ENCODE measurements at regions of chrX and their contacts with region 1.

Region 1: DNA sequence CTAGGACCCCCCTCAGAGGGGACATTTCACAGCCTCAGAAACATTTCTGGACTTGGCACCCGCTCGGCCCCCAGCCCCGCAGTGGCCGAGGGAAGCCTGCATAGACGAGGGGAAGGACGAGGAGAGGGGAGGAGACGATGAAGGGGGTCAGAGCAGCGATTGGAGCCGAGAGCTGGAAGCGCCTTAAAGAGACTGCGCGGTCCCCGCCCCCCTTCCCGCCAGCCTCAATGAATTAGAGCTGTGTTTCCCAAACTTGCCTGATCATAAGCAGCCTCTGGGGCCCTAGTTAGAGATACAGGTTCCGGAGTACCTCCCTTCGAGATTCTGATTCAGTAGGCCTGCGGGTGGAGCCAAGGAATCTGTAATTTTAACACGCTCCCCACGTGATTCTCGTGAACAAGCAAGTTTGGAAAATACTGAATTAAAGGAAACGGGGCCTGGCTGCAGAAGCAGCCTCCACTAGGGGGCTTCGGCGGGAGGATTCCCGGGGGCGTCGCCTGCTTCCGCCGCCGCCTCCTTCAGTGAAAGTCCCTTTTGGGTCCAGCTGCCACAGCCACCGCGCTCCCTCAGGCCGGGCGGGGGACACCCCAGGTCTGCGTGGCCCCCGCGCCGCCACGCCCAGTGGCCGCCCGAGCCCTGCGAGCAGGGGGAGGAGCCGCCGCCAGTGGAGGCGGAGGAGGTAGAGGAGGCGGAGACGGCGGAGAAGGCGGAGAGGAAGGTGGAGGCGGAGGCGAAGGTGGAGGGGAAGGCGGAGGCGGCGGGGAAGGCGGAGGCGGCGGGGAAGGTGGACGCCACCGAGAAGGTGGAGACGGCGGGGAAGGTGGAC is at the start of gene USP27X:
- DNase-seq: peak; percentile 75
- H3K4me3 Mint-ChIP-seq: peak within 1 kb of the TSS; percentile 80
- H3K27ac Mint-ChIP-seq: peak within 1 kb of the TSS; percentile 71
- H3K4me1 Mint-ChIP-seq: peaks cover 17% of the 10 kb centered on the region
- H3K27me3 Mint-ChIP-seq: peaks cover 1% of the 10 kb centered on the region
- total RNA-seq, gene USP27X: 1.2 and 1.9 TPM in 2 replicates

Region 2: GRCh38 chrX:49291615-49292337 is 587.3 kb before region 1 on chrX:
- intact Hi-C with region 1: loop called (anchors 5 kb)
- DNase-seq: peak; percentile 37
- H3K4me3 Mint-ChIP-seq: no peak overlapping the region
- H3K27ac Mint-ChIP-seq: no peak overlapping the region
- H3K4me1 Mint-ChIP-seq: peaks cover 16% of the 10 kb centered on the region
- H3K27me3 Mint-ChIP-seq: peaks cover 10% of the 10 kb centered on the region

Region 3: GRCh38 chrX:49761481-49761880 is 117.6 kb before region 1 on chrX:
- intact Hi-C with region 1: loop called (anchors 2 kb)
- DNase-seq: no peak
- H3K4me3 Mint-ChIP-seq: no peak overlapping the region
- H3K27ac Mint-ChIP-seq: no peak overlapping the region
- H3K4me1 Mint-ChIP-seq: no peaks in the 10 kb centered on the region
- H3K27me3 Mint-ChIP-seq: peaks cover 5% of the 10 kb centered on the region

Region 4: GRCh38 chrX:49773993-49774392 is 105.1 kb before region 1 on chrX:
- intact Hi-C with region 1: no loop called
- DNase-seq: no peak
- H3K4me3 Mint-ChIP-seq: no peak overlapping the region
- H3K27ac Mint-ChIP-seq: no peak overlapping the region
- H3K4me1 Mint-ChIP-seq: no peaks in the 10 kb centered on the region
- H3K27me3 Mint-ChIP-seq: peaks cover 17% of the 10 kb centered on the region

Region 5: DNA sequence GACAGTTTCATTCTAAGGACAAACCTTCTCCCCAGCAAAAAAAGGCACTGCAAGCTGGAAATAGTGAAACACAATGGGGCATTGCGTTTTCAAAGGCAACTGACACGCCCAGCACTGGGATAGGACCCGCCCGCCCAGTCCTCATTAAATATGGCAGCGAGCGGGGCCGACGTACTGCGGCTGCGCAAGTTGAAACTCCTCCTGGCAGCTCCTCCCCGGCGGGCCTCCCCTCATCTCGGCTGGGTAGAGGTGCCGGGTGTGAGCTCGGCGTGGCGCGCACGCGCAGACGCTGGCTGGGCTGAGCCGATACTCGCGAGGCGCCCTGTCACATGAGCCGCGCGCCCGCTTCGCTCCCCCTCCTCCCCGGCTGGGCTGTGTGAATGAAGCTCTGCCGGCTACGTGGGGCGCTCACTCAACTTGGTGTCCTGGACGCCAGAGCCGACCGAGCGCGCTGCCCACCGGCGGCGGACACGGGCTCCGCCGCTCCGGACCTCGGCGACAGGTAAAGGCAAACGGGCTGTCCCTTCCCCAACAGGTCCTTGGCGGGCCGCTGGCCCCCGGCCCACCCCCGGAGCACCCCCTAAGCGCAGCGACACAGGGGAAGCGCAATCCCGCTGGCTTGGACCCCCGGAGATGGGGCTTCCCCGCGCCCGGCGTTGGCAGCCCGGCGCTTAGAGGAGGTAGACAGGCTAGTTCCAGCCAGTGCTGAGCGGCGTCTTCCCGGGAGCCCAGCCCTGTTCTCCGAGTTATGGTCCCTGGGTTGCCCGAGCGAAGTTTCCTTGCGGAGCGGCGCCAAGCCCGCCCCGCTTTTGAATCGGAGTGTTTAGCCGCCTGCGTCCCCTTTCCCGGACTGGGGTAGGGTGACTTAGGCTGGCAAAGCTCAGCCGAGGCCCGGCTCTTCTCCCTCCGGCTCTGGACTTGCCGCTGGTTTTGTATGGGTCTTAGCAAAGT is 43.5 kb after region 1 on chrX and contains the start of gene CLCN5:
- intact Hi-C with region 1: loop called (anchors 2 kb)
- DNase-seq: peak; percentile 91
- H3K4me3 Mint-ChIP-seq: peak within 1 kb of the TSS; percentile 84
- H3K27ac Mint-ChIP-seq: peak within 1 kb of the TSS; percentile 58
- H3K4me1 Mint-ChIP-seq: peaks cover 12% of the 10 kb centered on the region
- H3K27me3 Mint-ChIP-seq: peaks cover 2% of the 10 kb centered on the region
- total RNA-seq, gene CLCN5: 2.8 and 5.5 TPM in 2 replicates

Region 6: DNA sequence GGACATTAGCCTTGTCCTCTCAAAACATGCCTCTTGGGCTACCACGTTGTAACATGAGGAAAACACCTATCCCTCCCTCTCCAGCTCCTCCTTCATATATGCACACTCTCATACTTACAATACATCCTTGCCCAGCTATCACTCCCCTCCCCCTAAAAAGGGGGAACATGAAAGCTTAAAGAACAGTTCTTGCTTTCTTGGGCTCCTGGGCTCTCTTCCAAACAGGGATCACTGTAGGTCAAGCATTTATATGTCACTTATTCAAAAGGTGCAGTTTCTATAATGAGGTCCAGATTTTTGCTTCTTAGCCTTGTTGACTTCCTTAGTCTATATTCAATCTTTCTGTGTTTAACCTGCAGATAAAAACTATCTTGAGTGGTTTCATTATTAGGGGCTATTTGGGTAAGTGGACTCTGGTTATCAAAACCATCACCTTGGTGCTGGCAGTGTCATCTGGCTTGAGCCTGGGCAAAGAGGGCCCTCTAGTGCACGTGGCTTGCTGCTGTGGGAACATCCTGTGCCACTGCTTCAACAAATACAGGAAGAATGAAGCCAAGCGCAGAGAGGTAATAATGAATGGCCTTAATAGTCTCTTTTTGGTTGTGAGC is 202.3 kb after region 1 on chrX:
- intact Hi-C with region 1: no loop called
- DNase-seq: no peak
- H3K4me3 Mint-ChIP-seq: no peak overlapping the region
- H3K27ac Mint-ChIP-seq: no peak overlapping the region
- H3K4me1 Mint-ChIP-seq: no peaks in the 10 kb centered on the region
- H3K27me3 Mint-ChIP-seq: no peaks in the 10 kb centered on the region

Measured in activated T-helper 1 cell treated with anti-CD3 and anti-CD28 coated beads, Interleukin-12 subunit alpha, Interleukin-12 subunit beta, Interleukin-2, Interleukin-4 antibody, amounts not matched to agents 30 ng/mL and 10 ng/mL and 1 ng/mL, durations not matched to agents 14 hours and 24 hours and 36 hours (primary cell).